ENCODE measurements at regions of chr1 and their contacts with region 1.

Region 1: GRCh38 chr1:20601129-20601825 is 12.4 kb downstream of the CDA start:
- DNase-seq: no peak
- H3K4me3 Mint-ChIP-seq: peak overlapping the region; percentile 11
- H3K27ac Mint-ChIP-seq: peak overlapping the region; percentile 59
- H3K4me1 Mint-ChIP-seq: peaks cover 43% of the 10 kb centered on the region
- H3K27me3 Mint-ChIP-seq: no peaks in the 10 kb centered on the region
- CTCF ChIP-seq: no peak

Region 2: GRCh38 chr1:19861034-19861433 is 740.2 kb before region 1 on chr1:
- CTCF ChIA-PET with region 1: no interaction called
- intact Hi-C with region 1: no loop called
- DNase-seq: peak; percentile 50
- H3K4me3 Mint-ChIP-seq: no peak overlapping the region
- H3K27ac Mint-ChIP-seq: peak overlapping the region; percentile 47
- H3K4me1 Mint-ChIP-seq: peaks cover 29% of the 10 kb centered on the region
- H3K27me3 Mint-ChIP-seq: no peaks in the 10 kb centered on the region
- CTCF ChIP-seq: no peak

Region 3: DNA sequence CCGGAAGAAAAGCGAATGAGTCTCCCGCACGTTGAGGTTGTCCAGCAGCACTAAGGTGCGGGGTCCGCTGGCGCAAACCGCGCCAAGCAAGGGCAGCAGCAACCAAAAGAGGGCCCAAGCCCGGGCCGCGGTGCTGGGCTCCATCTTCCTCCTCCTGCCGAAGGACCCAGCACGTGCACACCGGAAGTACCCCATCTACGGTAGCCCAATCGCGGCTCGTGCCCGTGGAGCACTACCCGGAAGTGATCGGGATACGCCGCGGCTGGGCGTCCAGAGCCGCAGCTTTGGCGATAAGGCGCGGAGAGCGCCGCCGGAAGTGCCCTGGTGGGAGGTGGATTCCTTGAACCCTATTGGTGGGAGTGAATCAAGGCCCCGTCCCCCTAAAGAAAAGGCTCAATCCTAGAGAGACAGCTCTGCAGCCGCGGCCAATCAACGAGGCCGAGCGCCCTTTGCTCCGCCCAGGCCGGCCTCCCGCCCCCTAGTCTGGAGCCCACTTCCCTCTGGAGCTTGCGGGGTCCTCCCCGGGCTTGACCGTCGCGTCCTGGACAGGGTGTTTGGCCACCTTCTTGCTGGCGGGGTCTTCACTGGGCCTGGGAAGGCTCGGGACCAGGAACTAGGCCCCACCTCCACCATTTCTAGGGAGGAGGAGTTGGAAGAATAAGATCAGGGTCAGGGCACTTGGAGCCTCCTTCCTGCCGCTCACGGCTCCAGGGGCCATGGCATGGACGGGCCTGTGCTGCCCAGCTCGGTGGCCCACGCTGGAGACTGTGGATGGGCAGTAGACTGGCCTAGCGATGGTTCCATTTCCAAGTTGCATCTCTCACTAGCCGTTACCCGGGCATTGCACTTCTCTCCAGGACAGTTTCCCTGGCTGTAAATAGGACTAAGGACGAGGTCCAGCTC is 60.2 kb after region 1 on chr1 and contains the start of gene DDOST:
- CTCF ChIA-PET with region 1: interaction called, 12 read pairs
- intact Hi-C with region 1: no loop called
- DNase-seq: peak; percentile 92
- H3K4me3 Mint-ChIP-seq: peak within 1 kb of the TSS; percentile 89
- H3K27ac Mint-ChIP-seq: peak within 1 kb of the TSS; percentile 66
- H3K4me1 Mint-ChIP-seq: peaks cover 22% of the 10 kb centered on the region
- H3K27me3 Mint-ChIP-seq: no peaks in the 10 kb centered on the region
- CTCF ChIP-seq: no peak
- total RNA-seq, gene DDOST: 266 and 278 TPM in 2 replicates